ENCODE measurements at regions of chr3 and their contacts with region 1.

Region 1: GRCh38 chr3:11643605-11644087 is at the start of gene VGLL4:
- DNase-seq: peak; percentile 93
- H3K4me3 ChIP-seq: peak within 1 kb of the TSS; percentile 79
- H3K27ac ChIP-seq: peak within 1 kb of the TSS; percentile 97
- H3K4me1 ChIP-seq: peaks cover 53% of the 10 kb centered on the region
- H3K27me3 ChIP-seq: no peaks in the 10 kb centered on the region
- CTCF ChIP-seq: peak; percentile 41
- total RNA-seq, gene VGLL4: 29.3 TPM

Region 2: DNA sequence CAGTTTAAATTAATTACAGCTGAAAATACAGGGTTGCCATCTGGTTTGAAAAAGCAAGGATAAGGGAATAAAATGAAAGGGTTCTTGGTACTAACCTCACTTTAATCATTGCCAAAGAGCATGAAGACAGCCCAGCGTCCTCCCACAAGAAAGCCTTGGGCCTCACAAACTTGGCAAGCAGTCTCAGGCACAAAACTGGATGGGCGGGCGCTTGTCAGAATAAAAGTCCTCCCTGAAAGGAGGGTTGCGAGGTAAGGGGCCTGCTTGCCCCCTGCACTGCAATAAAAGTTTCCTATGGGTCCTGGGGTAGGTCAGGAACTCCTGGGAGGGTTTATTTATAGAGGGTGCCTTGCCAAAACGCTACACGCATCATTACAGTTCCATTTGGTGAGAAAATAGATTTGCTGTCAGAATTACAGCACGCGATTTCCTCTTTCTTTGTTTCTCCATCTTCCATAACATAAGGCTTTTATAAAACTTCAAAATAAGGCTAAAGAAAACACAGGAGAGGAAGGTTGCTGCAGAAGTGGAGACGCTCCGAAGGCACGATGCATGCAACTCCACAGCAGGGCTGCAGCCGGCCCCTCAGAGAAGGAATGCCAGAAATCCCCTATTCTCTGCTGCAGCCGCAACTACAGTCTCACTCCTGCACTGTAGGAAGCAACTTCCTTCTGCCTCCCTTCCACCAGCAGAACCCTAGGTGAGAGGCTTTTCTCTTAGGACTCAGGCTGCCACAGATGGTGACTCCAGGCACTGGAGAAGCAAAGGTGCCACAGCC is 61.3 kb before region 1 on chr3:
- intact Hi-C with region 1: loop called (anchors 10 kb)
- DNase-seq: peak; percentile 67
- H3K4me3 ChIP-seq: peak overlapping the region; percentile 61
- H3K27ac ChIP-seq: peak overlapping the region; percentile 85
- H3K4me1 ChIP-seq: peaks cover 83% of the 10 kb centered on the region
- H3K27me3 ChIP-seq: no peaks in the 10 kb centered on the region
- CTCF ChIP-seq: no peak